ENCODE measurements at regions of chr18 and their contacts with region 1.

Region 1: GRCh38 chr18:74147779-74148542 is at the starts of genes FBXO15 and TIMM21:
- DNase-seq: peak; percentile 94 to 97 (median 96)
- H3K4me3 ChIP-seq: peak within 1 kb of the TSS; percentile 97 to 99
- H3K4me3 Mint-ChIP-seq: peak within 1 kb of the TSS; percentile 94 to 98 (median 95)
- H3K27ac ChIP-seq: peak within 1 kb of the TSS; percentile 92
- H3K27ac Mint-ChIP-seq: peak within 1 kb of the TSS; percentile 98 to 99 (median 99)
- H3K4me1 ChIP-seq: peaks cover 29% of the 10 kb centered on the region
- H3K4me1 Mint-ChIP-seq: peaks cover 27 to 55% (median 40%) of the 10 kb centered on the region in 4 donors
- H3K27me3 ChIP-seq: no peaks in the 10 kb centered on the region
- H3K27me3 Mint-ChIP-seq: no peaks in the 10 kb centered on the region
- total RNA-seq, gene FBXO15: 2.5 to 2.6 TPM
- total RNA-seq, gene TIMM21: 23.6 to 24.2 TPM

Region 2: GRCh38 chr18:74196220-74197119 is 48.5 kb after region 1 on chr18:
- CTCF ChIA-PET with region 1: interaction called, 8 read pairs
- POLR2A ChIA-PET with region 1: no interaction called
- intact Hi-C with region 1: loop called (anchors 1 kb)
- DNase-seq: peak; percentile 57 to 78 (median 72)
- H3K4me3 ChIP-seq: no peak overlapping the region
- H3K4me3 Mint-ChIP-seq: peak overlapping the region; percentile 71 to 90 (median 81)
- H3K27ac ChIP-seq: no peak overlapping the region
- H3K27ac Mint-ChIP-seq: peak overlapping the region in 6 of 7 donors; percentile 23 to 79 (median 65)
- H3K4me1 ChIP-seq: peaks cover 5% of the 10 kb centered on the region
- H3K4me1 Mint-ChIP-seq: peaks cover 0 to 4% (median 0%) of the 10 kb centered on the region in 4 donors
- H3K27me3 ChIP-seq: no peaks in the 10 kb centered on the region
- H3K27me3 Mint-ChIP-seq: peaks cover 2 to 14% of the 10 kb centered on the region in 2 donors

Region 3: DNA sequence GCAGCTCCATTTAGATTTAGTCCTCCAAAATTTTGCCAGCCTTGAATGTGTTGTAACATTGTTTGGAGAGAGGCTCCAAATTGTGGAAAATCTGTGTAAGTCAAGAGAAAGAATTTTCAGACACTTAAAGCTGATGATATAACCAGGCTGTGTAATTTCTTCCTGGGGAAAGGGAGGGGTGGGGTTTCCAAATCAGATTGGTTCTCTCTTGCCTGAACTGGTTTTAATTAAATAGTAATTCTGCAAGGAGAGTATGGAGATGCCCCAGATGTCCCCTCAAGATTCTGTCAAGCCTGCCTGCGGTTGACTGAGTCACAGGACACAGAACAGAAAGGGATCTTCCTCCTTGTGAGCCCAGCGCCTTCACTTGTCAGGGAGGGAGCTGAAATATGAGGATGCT is 222.2 kb after region 1 on chr18:
- CTCF ChIA-PET with region 1: no interaction called
- POLR2A ChIA-PET with region 1: no interaction called
- intact Hi-C with region 1: loop called (anchors 1 kb)
- DNase-seq: no peak
- H3K4me3 ChIP-seq: no peak overlapping the region
- H3K4me3 Mint-ChIP-seq: no peak overlapping the region
- H3K27ac ChIP-seq: no peak overlapping the region
- H3K27ac Mint-ChIP-seq: peak overlapping the region in 5 of 7 donors; percentile 25 to 89 (median 77)
- H3K4me1 ChIP-seq: peaks cover 34% of the 10 kb centered on the region
- H3K4me1 Mint-ChIP-seq: peaks cover 29 to 49% (median 39%) of the 10 kb centered on the region in 4 donors
- H3K27me3 ChIP-seq: no peaks in the 10 kb centered on the region
- H3K27me3 Mint-ChIP-seq: peaks cover 7 to 8% of the 10 kb centered on the region in 2 donors

Region 4: DNA sequence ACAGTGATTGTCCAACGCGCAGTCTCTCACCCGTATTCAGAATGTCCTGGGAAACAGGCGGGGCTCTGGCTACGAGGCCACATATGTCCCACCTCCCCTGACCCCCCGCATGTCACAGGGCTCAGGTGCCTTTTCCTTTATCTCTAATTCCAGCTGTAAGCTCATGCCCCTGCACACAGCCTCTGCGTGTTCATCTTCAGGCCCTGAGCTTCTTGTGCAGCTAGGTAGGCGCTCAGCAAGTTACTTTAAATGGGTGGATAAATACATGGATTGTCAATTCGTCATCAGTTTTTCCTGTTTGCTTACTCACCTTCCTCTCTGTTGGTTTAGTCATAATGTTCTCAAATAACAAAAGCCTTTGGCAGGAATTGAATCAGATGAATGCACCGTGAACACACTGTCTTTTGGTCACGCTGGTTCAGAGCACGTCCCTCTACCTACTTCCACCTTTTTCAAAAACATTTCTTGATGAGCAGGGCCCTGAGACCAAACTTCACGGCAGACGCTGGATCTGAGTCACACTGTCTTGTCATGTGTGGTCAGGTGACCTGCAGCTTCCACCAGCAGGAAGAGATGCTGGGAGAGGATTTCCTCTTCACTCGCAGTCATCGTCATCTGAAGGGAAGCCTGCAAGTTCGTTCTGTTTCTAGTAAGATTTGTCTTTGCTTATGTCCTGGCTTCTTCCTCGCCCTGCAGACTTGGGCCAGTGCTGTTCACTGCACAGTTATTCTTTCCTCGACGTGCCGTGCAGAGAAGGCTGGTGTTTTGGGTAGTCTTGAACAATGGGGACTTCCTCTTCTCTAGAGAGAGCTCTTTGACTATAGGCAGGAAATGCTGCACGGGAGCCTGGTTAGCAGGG is 922.9 kb after region 1 on chr18:
- CTCF ChIA-PET with region 1: no interaction called
- POLR2A ChIA-PET with region 1: no interaction called
- intact Hi-C with region 1: loop called (anchors 5 kb)
- DNase-seq: peak; percentile 70 to 89 (median 74)
- H3K4me3 ChIP-seq: peak overlapping the region; percentile 51 to 58
- H3K4me3 Mint-ChIP-seq: peak overlapping the region; percentile 79 to 97 (median 90)
- H3K27ac ChIP-seq: peak overlapping the region; percentile 74
- H3K27ac Mint-ChIP-seq: peak overlapping the region; percentile 89 to 100 (median 99)
- H3K4me1 ChIP-seq: peaks cover 34% of the 10 kb centered on the region
- H3K4me1 Mint-ChIP-seq: peaks cover 35 to 57% (median 41%) of the 10 kb centered on the region in 4 donors
- H3K27me3 ChIP-seq: no peaks in the 10 kb centered on the region
- H3K27me3 Mint-ChIP-seq: no peaks in the 10 kb centered on the region

Region 5: GRCh38 chr18:75247611-75248421 is 1099.9 kb after region 1 on chr18:
- CTCF ChIA-PET with region 1: no interaction called
- POLR2A ChIA-PET with region 1: no interaction called
- intact Hi-C with region 1: loop called (anchors 10 kb)
- DNase-seq: peak in 4 of 5 donors; percentile 51 to 61 (median 56)
- H3K4me3 ChIP-seq: peak overlapping the region; percentile 19 to 49
- H3K4me3 Mint-ChIP-seq: peak overlapping the region; percentile 80 to 91 (median 88)
- H3K27ac ChIP-seq: peak overlapping the region; percentile 46
- H3K27ac Mint-ChIP-seq: peak overlapping the region; percentile 88 to 98 (median 93)
- H3K4me1 ChIP-seq: peaks cover 51% of the 10 kb centered on the region
- H3K4me1 Mint-ChIP-seq: peaks cover 51 to 92% (median 70%) of the 10 kb centered on the region in 4 donors
- H3K27me3 ChIP-seq: no peaks in the 10 kb centered on the region
- H3K27me3 Mint-ChIP-seq: no peaks in the 10 kb centered on the region